Ascending aorta (tissue), 2 donors: ENCODE measurements at regions of chr11 and their contacts with region 1.

Region 1: GRCh38 chr11:113632981-113633380 is 73.1 kb downstream of the TMPRSS5 start:
- DNase-seq: peak in 1 of 2 donors; percentile 91
- H3K4me3 ChIP-seq: no peak overlapping the region
- H3K27ac ChIP-seq: peak overlapping the region; percentile 93 to 97
- H3K4me1 ChIP-seq: peaks cover 4 to 19% of the 10 kb centered on the region in 2 donors
- H3K27me3 ChIP-seq: no peaks in the 10 kb centered on the region
- CTCF ChIP-seq: no peak

Region 2: DNA sequence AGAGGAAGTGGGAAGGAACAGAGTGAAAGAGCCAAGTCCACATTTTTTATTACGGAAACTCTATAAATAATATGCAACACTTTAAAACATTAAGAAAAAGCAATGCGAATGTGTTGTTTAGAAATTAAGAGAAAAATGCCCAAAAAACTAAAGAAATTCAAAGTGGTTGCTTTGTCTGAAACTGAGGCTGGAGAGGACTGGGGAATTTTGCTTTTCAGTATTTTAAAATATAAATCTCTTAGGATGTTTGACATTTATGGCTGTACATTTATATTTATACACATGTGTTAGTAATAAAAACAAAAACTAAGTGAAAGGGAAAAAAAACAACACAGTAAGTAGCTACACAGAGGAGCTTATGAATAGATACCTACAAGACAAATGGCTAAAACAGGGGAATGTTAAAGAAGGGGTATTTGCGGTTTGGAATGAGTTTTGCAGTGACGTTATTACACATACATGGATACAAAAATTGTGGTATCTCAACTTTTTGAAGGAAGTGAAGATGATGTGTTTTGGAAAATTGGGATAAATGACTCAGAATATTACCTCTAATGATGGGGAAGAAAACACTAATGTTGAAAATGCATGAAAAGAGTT is 60.7 kb before region 1 on chr11:
- intact Hi-C with region 1: loop called (anchors 5 kb)
- DNase-seq: no peak
- H3K4me3 ChIP-seq: no peak overlapping the region
- H3K27ac ChIP-seq: peak overlapping the region; percentile 63 to 74
- H3K4me1 ChIP-seq: peaks cover 4 to 16% of the 10 kb centered on the region in 2 donors
- H3K27me3 ChIP-seq: no peaks in the 10 kb centered on the region
- CTCF ChIP-seq: no peak

Region 3: DNA sequence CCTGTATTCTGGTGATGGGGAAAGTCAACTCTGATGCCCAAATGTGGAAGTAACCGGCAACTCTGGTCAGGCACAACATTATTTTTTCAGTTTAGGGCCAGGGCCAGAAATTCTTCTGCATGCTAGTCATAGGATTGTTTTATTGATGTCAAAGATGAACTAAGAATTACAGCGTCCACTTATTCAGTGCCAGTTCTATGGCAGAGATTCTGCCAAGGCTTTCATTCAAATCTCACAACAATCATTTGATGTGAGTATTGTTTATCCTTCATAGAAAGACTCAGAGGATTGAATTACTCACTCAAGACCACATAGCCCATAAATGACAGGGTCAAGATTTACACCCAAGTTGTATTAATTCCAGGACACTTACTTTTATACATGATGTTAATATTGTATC is 14.6 kb before region 1 on chr11:
- intact Hi-C with region 1: loop called (anchors 2 kb)
- DNase-seq: peak in 1 of 2 donors; percentile 80
- H3K4me3 ChIP-seq: no peak overlapping the region
- H3K27ac ChIP-seq: peak overlapping the region; percentile 77 to 94
- H3K4me1 ChIP-seq: peaks cover 3 to 29% of the 10 kb centered on the region in 2 donors
- H3K27me3 ChIP-seq: no peaks in the 10 kb centered on the region
- CTCF ChIP-seq: no peak

Region 4: GRCh38 chr11:113668255-113668654 is 35.3 kb after region 1 on chr11:
- intact Hi-C with region 1: loop called (anchors 2 kb)
- DNase-seq: no peak
- H3K4me3 ChIP-seq: no peak overlapping the region
- H3K27ac ChIP-seq: peak overlapping the region; percentile 65 to 79
- H3K4me1 ChIP-seq: peaks cover 0 to 6% of the 10 kb centered on the region in 2 donors
- H3K27me3 ChIP-seq: no peaks in the 10 kb centered on the region
- CTCF ChIP-seq: no peak